ENCODE measurements at regions of chr17 and their contacts with region 1.

Region 1: DNA sequence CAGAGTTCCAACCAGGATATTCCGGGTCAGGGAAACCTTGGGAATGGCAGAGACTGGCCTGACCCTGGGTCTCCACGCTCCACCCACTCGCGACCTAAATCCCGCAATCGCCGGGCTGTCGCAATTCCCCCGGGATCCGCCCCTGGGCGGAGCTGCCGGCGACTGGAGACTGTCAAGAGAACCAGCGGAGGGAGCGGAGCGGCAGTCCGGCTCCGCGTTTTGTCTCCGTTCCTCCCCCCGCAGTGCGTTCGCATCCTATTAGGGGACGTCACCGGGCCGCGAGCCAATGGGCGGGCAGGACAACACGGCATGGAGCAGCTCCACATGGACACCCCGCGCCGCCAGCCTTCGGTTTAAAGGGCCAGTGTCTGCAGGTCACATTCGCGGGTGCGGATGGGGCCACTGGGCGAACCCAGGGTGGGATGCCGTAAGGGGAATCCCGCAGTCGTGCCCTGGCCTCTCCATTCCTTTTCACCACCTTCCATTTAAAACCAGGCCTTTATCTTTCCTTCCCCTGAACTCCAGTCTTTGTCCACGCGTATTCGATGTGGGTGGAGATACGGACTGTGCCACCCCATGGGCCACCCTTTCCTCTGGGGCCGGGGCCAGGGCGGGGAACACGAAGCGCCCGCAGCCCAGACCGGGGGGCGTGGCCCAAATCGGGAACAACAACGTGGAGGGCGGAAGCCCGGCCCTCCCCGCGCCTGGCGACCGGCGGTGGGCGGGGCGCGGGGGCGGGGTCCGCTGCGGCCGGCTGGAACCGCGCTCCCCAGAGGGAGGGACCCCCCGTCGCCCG is 764 bp upstream of the MNT start:
- DNase-seq: peak; percentile 99
- H3K4me3 ChIP-seq: peak overlapping the region; percentile 81
- H3K27ac ChIP-seq: peak overlapping the region; percentile 82
- H3K4me1 ChIP-seq: peaks cover 27% of the 10 kb centered on the region
- CTCF ChIP-seq: no peak

Region 2: GRCh38 chr17:2192367-2193057 is 209.1 kb before region 1 on chr17:
- CTCF ChIA-PET with region 1: no interaction called
- POLR2A ChIA-PET with region 1: no interaction called
- intact Hi-C with region 1: no loop called
- DNase-seq: peak; percentile 66
- H3K4me3 ChIP-seq: no peak overlapping the region
- H3K27ac ChIP-seq: no peak overlapping the region
- H3K4me1 ChIP-seq: peaks cover 11% of the 10 kb centered on the region
- CTCF ChIP-seq: no peak

Region 3: DNA sequence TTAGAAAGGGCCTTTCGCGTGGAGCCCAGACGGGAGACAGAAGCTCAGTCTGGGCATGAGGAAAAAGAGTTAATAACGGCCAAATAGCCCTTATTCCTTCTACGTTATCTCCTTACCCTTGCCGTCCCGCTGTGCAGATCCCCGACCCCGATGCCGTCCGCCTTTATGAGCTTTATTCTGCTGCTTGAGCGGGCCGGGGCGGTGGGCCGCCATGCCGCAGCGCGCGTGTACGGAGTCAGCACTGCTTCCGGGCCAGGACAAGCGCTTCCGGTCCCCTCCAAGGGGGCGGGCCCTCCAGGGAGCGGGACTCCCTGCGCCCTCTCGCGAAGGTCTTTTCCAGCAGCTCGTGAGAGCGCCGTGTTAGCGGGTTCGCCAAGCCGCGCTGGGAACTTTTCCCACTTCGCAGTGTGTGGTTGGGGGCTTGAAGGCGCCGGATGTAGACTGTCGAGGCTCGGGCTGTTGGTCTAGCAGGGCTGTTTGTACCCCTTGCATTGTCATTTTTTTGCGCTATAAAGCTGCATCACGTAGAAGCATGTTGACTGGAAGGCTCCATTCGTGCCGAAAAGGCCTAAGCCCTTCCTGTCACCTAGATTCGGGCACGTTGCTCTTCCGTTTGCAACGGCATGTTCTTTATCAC is 65.3 kb before region 1 on chr17 and contains the start of gene TSR1:
- CTCF ChIA-PET with region 1: no interaction called
- POLR2A ChIA-PET with region 1: no interaction called
- intact Hi-C with region 1: loop called (anchors 2 kb)
- DNase-seq: peak; percentile 93
- H3K4me3 ChIP-seq: peak within 1 kb of the TSS; percentile 95
- H3K27ac ChIP-seq: peak within 1 kb of the TSS; percentile 78
- H3K4me1 ChIP-seq: peaks cover 32% of the 10 kb centered on the region
- CTCF ChIP-seq: peak; percentile 48; the same call in 1 of the 2 replicates
- total RNA-seq, gene TSR1: 71.4 and 85.8 TPM in 2 replicates

Region 4: GRCh38 chr17:2438823-2439222 is 37.2 kb after region 1 on chr17:
- CTCF ChIA-PET with region 1: no interaction called
- POLR2A ChIA-PET with region 1: no interaction called
- intact Hi-C with region 1: no loop called
- DNase-seq: no peak
- H3K4me3 ChIP-seq: no peak overlapping the region
- H3K27ac ChIP-seq: no peak overlapping the region
- H3K4me1 ChIP-seq: no peaks in the 10 kb centered on the region
- CTCF ChIP-seq: no peak

Region 5: GRCh38 chr17:2592971-2593820 is 191.6 kb after region 1 on chr17 and contains the start of gene PAFAH1B1:
- CTCF ChIA-PET with region 1: no interaction called
- POLR2A ChIA-PET with region 1: no interaction called
- intact Hi-C with region 1: loop called (anchors 5 kb)
- DNase-seq: peak; percentile 91
- H3K4me3 ChIP-seq: peak within 1 kb of the TSS; percentile 91
- H3K27ac ChIP-seq: peak within 1 kb of the TSS; percentile 80
- H3K4me1 ChIP-seq: peaks cover 26% of the 10 kb centered on the region
- CTCF ChIP-seq: peak; percentile 39; the same call in 1 of the 2 replicates
- total RNA-seq, gene PAFAH1B1: 51.1 and 61.3 TPM in 2 replicates

Region 6: DNA sequence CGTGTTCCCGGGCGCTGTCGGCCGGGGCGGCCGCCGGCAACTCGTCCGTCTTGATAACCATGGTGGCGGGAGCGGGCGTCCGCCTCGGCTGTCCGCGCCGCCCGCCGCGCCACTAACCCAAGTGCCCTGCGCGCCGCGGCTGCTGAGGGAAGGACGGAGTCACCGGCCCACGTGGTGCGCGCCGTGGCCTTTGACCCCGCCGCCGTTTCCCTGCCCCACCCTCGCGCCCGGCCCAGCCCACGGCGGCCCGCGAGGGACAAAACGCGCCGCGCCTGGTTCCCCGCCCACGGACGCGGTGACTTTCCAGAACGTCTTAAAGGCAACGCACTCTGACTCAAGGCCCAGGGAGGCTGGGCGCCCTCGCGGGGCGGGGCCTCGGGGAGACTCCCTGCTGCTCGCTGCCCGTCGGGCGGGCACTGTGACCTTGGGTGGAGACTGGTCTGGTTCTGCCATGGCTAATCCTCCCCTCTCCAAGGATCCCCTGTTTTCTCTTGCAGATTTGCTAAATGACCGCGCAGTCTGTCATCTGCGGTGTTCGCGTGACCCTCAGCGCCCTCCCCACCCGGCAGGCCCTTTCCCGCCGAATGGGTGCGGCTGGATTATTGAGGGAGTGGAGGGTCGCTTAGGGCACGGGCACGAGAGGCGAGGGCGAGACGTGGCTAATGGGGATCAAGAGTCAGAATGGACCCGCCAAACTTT is 310.1 kb after region 1 on chr17 and contains the start of gene CLUH:
- CTCF ChIA-PET with region 1: no interaction called
- POLR2A ChIA-PET with region 1: no interaction called
- intact Hi-C with region 1: loop called (anchors 1 kb)
- DNase-seq: peak; percentile 94
- H3K4me3 ChIP-seq: peak within 1 kb of the TSS; percentile 100
- H3K27ac ChIP-seq: peak within 1 kb of the TSS; percentile 65
- H3K4me1 ChIP-seq: peaks cover 35% of the 10 kb centered on the region
- CTCF ChIP-seq: no peak
- total RNA-seq, gene CLUH: 85.2 and 96.3 TPM in 2 replicates

Measured in OCI-LY7 (cell line).